ENCODE measurements at regions of chr10 and their contacts with region 1.

Region 1: DNA sequence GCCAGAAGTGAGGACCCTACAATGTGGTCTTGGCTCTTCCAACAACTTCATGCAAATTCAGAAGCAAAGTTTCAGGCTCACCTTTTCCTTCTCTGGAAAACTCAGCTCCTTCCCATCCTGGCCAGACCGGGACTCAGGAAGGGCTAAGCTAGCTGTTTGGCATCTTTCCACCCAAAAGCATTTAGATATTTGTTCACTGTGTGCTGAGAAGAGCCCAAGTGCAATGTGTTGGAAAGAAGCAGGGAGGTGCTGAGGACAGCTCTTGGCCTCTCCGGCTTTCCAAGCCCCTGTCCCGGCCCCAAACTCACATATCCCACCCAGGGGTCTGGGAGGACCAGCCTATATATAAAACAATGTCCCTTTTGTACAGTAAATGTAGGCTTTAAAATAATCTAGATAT is 44.5 kb downstream of the MKI67 start:
- DNase-seq: peak in 1 of 3 donors; percentile 17
- ATAC-seq: no peak
- H3K4me3 ChIP-seq: no peak overlapping the region
- H3K27ac ChIP-seq: no peak overlapping the region
- H3K4me1 ChIP-seq: no peaks in the 10 kb centered on the region
- H3K27me3 ChIP-seq: peaks cover 0 to 8% of the 10 kb centered on the region in 2 donors
- CTCF ChIP-seq: no peak
- POLR2A ChIP-seq: no peak

Region 2: GRCh38 chr10:128147064-128147463 is 65.3 kb after region 1 on chr10:
- intact Hi-C with region 1: loop called (anchors 5 to 10 kb)
- DNase-seq: no peak
- ATAC-seq: no peak
- H3K4me3 ChIP-seq: no peak overlapping the region
- H3K27ac ChIP-seq: no peak overlapping the region
- H3K4me1 ChIP-seq: no peaks in the 10 kb centered on the region
- H3K27me3 ChIP-seq: no peaks in the 10 kb centered on the region
- CTCF ChIP-seq: no peak
- POLR2A ChIP-seq: no peak

Region 3: GRCh38 chr10:128400564-128400963 is 318.8 kb after region 1 on chr10:
- intact Hi-C with region 1: no loop called
- DNase-seq: no peak
- ATAC-seq: no peak
- H3K4me3 ChIP-seq: no peak overlapping the region
- H3K27ac ChIP-seq: no peak overlapping the region
- H3K4me1 ChIP-seq: no peaks in the 10 kb centered on the region
- H3K27me3 ChIP-seq: no peaks in the 10 kb centered on the region
- CTCF ChIP-seq: no peak
- POLR2A ChIP-seq: no peak

Region 4: DNA sequence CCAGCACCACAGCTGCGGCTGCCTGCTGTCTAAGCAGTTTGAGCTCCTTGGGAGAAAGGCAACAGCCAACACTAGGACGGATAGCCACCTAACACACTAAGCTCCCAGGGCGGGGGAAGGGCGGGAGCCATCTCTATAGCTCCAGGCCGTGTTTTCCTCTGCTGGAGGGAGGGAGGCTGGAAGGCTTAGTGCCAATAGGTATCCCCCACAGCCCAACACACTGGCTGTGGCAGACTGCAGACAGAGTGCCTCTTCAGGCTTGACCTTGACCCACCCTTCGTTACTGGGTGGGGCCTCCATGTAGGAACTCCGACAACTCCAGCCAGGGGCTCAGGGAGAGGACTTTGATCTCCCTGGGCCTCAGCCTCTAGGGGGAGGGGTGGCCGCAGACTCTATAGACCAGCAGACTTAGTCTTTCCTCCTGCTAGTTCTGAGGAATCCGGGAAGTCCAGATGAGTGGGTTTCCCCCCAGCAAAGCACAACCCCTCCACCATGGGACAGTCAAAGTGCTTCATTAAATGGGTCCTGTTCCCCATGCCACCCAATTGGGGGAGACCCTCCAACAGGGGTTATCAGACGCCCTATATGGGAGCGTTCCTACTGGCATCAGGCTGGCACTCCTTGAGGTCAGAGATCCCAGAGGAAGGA is 358.9 kb after region 1 on chr10:
- intact Hi-C with region 1: no loop called
- DNase-seq: no peak
- ATAC-seq: no peak
- H3K4me3 ChIP-seq: no peak overlapping the region
- H3K27ac ChIP-seq: no peak overlapping the region
- H3K4me1 ChIP-seq: no peaks in the 10 kb centered on the region
- H3K27me3 ChIP-seq: no peaks in the 10 kb centered on the region
- CTCF ChIP-seq: no peak
- POLR2A ChIP-seq: no peak